AG04449 (cell line): ENCODE measurements at regions of chr20 and their contacts with region 1.

Region 1: DNA sequence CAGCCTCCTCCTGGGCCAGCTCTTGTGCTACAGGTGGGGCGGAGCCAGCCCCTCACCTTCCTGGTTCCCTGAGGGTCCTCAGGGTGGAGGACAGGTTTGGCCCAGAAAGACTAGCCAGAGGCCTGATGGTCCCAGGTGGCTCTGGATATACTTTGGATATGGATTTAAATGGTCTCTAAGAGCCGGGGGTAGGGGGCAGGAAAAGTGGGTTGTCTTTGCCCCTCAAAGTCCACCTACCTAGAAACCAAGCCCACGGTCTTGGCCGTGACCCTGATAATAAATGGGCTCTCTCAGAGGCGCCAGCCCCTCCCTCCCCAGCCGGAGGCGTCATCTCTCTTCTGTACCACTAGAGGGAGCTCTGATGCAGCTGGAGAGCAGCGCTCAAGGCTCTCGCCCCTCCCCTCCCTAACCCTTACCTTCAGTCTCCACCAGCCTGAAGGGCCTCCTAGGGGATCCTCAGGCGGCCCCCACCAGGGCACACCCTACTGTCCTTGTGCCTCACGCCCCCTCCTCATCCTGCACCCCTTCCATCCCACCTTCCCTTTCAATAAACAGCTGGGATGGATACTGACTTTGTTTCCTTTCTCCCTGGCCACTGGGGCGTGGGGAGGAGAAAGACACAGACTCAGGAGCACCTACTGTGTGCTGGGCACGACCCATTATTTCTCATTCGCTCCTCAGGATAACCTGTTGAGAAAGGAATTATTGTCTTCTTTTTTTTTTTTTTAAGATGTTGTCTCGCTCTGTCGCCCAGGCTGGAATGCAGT is 7.6 kb downstream of the NRSN2 start:
- DNase-seq: no peak
- H3K4me3 ChIP-seq: no peak overlapping the region
- CTCF ChIP-seq: peak; percentile 96

Region 2: GRCh38 chr20:324177-325044 is 30.1 kb before region 1 on chr20:
- CTCF ChIA-PET with region 1: interaction called, 14 read pairs
- POLR2A ChIA-PET with region 1: no interaction called
- DNase-seq: no peak
- H3K4me3 ChIP-seq: peak overlapping the region; percentile 73
- CTCF ChIP-seq: peak; percentile 46

Region 3: GRCh38 chr20:371755-372542 is 17.5 kb after region 1 on chr20:
- CTCF ChIA-PET with region 1: interaction called, 89 read pairs
- POLR2A ChIA-PET with region 1: no interaction called
- DNase-seq: no peak
- H3K4me3 ChIP-seq: no peak overlapping the region
- CTCF ChIP-seq: no peak

Region 4: DNA sequence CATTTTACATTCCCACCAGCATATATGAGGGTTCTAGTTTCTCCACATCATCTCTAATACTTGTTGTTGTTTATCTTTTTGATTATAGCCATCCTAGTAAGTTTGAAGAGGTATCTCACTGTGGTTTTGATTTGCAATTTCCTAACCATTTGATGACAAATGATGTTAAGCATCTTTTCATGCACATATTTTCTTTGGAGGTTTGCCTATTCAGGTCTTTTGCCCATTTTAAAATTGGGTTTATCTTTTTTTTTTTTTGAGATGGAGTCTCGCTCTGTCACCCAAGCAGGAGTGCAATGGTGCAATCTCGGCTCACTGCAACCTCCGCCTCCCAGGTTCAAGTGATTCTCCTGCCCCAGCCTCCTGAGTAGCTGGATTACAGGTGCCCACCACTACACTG is 57.6 kb after region 1 on chr20:
- CTCF ChIA-PET with region 1: interaction called, 11 read pairs
- POLR2A ChIA-PET with region 1: no interaction called
- DNase-seq: no peak
- H3K4me3 ChIP-seq: no peak overlapping the region
- CTCF ChIP-seq: no peak

Region 5: GRCh38 chr20:478949-479429 is 124.5 kb after region 1 on chr20:
- CTCF ChIA-PET with region 1: interaction called, 142 read pairs
- POLR2A ChIA-PET with region 1: no interaction called
- DNase-seq: no peak
- H3K4me3 ChIP-seq: no peak overlapping the region
- CTCF ChIP-seq: peak; percentile 15

Region 6: GRCh38 chr20:496126-496696 is 141.7 kb after region 1 on chr20:
- CTCF ChIA-PET with region 1: interaction called, 17 read pairs
- POLR2A ChIA-PET with region 1: no interaction called
- DNase-seq: no peak
- H3K4me3 ChIP-seq: no peak overlapping the region
- CTCF ChIP-seq: no peak

Region 7: GRCh38 chr20:667391-667964 is 313.0 kb after region 1 on chr20:
- CTCF ChIA-PET with region 1: interaction called, 12 read pairs
- POLR2A ChIA-PET with region 1: no interaction called
- DNase-seq: no peak
- H3K4me3 ChIP-seq: no peak overlapping the region
- CTCF ChIP-seq: peak; percentile 87